MCF 10A (cell line): ENCODE measurements at regions of chr9 and their contacts with region 1.

Region 1: DNA sequence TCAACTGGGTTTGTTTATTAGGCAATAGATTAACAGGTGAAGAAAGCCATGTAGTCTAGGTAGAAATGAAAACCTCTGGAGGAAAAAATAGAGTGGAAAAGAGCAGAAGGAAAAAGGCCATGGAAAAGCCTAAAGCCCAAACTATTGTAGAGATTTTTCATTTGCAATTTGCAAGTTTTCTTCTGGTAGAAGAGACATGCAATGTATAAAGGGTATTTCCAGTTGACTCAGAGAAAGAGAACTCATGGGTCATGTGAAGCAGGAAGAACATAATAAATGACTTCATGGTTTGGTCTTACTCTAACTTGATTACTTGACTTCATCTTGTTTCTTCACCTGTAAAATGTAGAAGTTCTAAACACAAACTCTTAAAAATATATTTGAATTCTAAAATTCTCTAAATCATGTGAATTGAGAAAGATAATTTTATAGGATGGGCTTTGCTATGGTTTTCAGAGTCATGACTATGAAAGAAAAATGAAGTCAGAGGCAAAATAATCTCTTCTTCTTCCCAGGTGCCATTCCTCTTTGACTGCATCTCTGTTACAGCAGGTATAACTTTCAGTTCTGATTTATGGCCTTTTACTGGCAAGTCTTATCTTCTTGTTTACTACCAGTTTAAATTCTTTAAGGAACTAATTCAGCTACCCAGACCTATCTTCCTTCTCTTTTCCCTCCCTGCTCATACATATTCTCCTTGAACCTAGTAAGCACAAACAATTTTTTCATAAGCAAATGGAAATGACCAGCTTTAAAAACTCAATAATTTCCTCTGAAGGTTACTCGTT is 47.7 kb upstream of the TMC1 start:
- DNase-seq: no peak
- H3K4me3 Mint-ChIP-seq: no peak overlapping the region
- H3K27ac Mint-ChIP-seq: no peak overlapping the region
- H3K4me1 Mint-ChIP-seq: peaks cover 20% of the 10 kb centered on the region
- H3K27me3 Mint-ChIP-seq: no peaks in the 10 kb centered on the region
- CTCF ChIP-seq: no peak

Region 2: DNA sequence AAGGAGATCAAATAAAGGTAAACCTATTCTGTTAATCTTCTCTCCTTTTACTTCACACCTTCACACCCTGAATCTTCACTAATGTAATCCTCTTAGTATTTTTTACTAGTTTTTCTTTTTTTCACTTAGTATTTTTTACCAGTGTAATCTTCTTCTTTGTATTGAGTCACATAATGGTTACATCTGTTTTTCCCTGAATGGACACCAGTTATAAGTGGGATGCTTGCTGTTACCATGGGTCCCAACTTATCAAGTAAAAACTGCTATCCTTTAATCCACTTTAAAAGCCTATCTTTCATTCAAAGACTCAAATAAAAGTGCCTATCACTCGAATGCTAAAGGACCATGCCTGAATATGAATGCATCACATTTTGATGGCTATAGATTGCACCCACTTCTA is 123.8 kb before region 1 on chr9:
- CTCF ChIA-PET with region 1: no interaction called
- POLR2A ChIA-PET with region 1: no interaction called
- intact Hi-C with region 1: no loop called
- DNase-seq: no peak
- H3K4me3 Mint-ChIP-seq: no peak overlapping the region
- H3K27ac Mint-ChIP-seq: peak overlapping the region; percentile 64
- H3K4me1 Mint-ChIP-seq: no peaks in the 10 kb centered on the region
- H3K27me3 Mint-ChIP-seq: no peaks in the 10 kb centered on the region
- CTCF ChIP-seq: no peak

Region 3: DNA sequence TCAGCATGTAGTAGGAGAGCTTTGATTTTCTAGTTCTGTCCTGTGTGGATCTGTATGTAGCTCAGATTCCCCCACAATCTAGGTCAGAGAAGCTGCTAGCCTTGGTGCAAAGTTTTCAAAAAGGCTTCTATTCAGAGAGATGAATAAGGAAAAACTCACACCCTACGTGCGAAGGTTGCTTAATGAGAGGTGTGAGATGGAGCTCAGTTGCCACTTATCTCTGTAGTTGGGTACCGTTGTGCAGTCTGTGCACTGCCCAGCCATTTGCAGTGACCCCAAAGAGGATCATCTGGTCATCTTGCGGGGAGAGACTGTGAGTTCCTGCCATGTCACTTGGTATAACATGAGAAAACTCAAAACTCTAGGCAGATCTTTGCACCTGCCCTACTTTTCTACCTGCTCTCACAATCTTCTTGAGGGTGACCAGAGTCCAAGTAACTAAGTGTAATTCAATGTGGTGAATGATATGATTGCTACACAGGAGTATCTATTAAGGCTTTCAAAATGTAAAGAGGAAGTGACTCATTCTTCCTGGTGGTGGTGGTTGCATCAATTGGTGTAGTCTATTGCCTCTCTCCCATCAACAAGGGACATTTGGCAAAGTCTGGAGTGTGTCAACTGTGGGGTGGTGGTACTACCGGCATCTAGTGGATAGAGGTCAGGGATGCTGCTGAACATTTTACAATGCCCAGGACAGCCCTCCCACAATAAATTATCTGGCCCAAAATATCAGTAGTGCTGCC is 112.9 kb after region 1 on chr9:
- CTCF ChIA-PET with region 1: interaction called, 4 read pairs
- POLR2A ChIA-PET with region 1: interaction called, 4 read pairs
- intact Hi-C with region 1: loop called (anchors 2 kb)
- DNase-seq: peak; percentile 98
- H3K4me3 Mint-ChIP-seq: no peak overlapping the region
- H3K27ac Mint-ChIP-seq: peak overlapping the region; percentile 29
- H3K4me1 Mint-ChIP-seq: peaks cover 38% of the 10 kb centered on the region
- H3K27me3 Mint-ChIP-seq: no peaks in the 10 kb centered on the region
- CTCF ChIP-seq: no peak